ENCODE measurements at regions of chr10 and their contacts with region 1.

Region 1: GRCh38 chr10:35642027-35642792 is at the start of gene FZD8:
- DNase-seq: peak; percentile 63 to 95
- H3K4me3 ChIP-seq: peak within 1 kb of the TSS; percentile 76 to 83
- H3K27ac ChIP-seq: peak within 1 kb of the TSS; percentile 88 to 91
- H3K4me1 ChIP-seq: peaks cover 0 to 6% of the 10 kb centered on the region in 2 donors
- H3K27me3 ChIP-seq: no peaks in the 10 kb centered on the region
- CTCF ChIP-seq: peak in 1 of 3 experiments; percentile 27
- total RNA-seq, gene FZD8: 23.0 TPM

Region 2: GRCh38 chr10:34650156-34650555 is 992.1 kb before region 1 on chr10:
- intact Hi-C with region 1: no loop called
- DNase-seq: no peak
- H3K4me3 ChIP-seq: no peak overlapping the region
- H3K27ac ChIP-seq: no peak overlapping the region
- H3K4me1 ChIP-seq: no peaks in the 10 kb centered on the region
- H3K27me3 ChIP-seq: no peaks in the 10 kb centered on the region
- CTCF ChIP-seq: no peak

Region 3: DNA sequence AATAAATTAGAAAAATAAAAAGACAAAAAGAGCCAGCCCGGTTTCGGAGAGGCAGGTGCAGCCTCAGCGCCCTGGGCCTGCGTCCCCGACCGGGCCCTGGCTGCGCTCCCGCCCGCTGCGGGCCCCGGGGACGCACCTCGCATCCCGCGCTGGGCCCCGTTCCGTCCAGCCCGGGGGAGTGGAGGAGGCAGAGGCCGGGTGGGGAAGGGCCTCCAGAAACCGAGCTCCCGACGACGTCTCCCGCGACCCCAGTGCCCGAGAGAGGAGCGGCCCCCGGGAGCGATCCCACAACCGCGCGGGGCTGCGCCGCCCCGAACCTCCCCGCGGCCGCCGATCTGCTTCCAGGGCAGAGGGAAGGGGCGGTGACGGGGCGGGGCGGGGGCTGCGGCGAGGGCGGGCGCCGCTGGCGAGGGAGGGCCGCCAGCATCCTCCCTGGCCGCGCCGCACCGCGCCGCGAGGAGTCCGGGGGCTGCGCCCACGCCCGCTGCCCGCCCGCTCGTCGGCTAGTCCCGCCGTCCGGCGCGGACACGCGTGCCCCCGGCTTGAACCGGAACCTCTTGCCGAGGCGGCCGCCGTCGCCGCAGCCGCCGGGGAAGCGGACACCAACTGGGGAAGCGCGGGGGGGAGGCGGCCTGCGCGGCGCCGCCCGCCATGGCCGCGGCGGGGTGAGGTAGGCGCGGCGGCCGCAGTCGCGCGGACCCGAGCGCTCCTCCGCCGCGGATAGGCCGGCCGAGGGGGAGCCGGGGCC is 306.0 kb before region 1 on chr10 and contains the start of gene CCNY:
- intact Hi-C with region 1: loop called (anchors 5 kb)
- DNase-seq: peak in 1 of 2 donors; percentile 83
- H3K4me3 ChIP-seq: peak within 1 kb of the TSS; percentile 65 to 98
- H3K27ac ChIP-seq: peak within 1 kb of the TSS; percentile 70 to 80
- H3K4me1 ChIP-seq: peaks cover 3 to 35% of the 10 kb centered on the region in 2 donors
- H3K27me3 ChIP-seq: no peaks in the 10 kb centered on the region
- CTCF ChIP-seq: peak in 1 of 3 experiments; percentile 16
- total RNA-seq, gene CCNY: 37.5 TPM

Region 4: DNA sequence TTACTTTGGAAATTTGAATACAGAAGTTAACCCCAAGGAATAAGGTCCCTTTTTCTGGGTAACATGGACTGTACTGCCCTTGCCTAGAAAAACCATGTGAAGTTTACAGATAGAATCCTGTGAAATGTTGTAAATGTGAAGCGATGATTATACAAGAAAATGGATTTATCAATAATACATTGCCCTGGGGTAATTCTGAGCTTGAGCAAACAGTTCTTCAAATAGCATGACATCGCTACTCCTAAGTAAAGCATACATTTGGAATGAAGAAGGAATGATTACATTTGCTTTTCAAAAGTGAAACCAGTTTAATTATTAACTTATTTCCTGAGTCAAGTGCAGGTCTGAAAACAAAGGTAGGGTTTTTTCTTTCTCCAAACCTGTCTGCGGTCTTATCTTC is 43.2 kb after region 1 on chr10:
- intact Hi-C with region 1: no loop called
- DNase-seq: no peak
- H3K4me3 ChIP-seq: no peak overlapping the region
- H3K27ac ChIP-seq: no peak overlapping the region
- H3K4me1 ChIP-seq: no peaks in the 10 kb centered on the region
- H3K27me3 ChIP-seq: no peaks in the 10 kb centered on the region
- CTCF ChIP-seq: no peak

Region 5: DNA sequence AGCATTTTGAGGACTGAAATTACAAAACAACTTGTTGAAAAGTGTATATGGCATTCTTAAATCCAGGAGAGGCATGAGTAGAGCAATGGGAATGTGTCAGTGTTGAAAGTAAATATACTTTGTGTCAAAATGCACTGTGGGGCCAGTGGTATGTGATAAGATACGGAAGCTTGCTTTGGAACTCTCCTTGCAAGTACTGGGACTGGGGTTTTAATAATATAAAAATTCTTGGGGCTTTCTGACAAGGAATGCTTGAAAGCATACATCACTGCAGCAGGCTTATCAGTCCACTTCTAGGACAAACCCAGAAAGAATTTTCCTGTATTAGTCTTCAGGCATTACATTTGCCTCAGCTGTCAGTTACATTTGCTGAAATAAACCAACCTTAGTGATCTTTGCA is 472.7 kb after region 1 on chr10:
- intact Hi-C with region 1: loop called (anchors 5 kb)
- DNase-seq: no peak
- H3K4me3 ChIP-seq: no peak overlapping the region
- H3K27ac ChIP-seq: peak overlapping the region in 1 of 2 donors; percentile 10
- H3K4me1 ChIP-seq: peaks cover 0 to 30% of the 10 kb centered on the region in 2 donors
- H3K27me3 ChIP-seq: no peaks in the 10 kb centered on the region
- CTCF ChIP-seq: no peak

Region 6: DNA sequence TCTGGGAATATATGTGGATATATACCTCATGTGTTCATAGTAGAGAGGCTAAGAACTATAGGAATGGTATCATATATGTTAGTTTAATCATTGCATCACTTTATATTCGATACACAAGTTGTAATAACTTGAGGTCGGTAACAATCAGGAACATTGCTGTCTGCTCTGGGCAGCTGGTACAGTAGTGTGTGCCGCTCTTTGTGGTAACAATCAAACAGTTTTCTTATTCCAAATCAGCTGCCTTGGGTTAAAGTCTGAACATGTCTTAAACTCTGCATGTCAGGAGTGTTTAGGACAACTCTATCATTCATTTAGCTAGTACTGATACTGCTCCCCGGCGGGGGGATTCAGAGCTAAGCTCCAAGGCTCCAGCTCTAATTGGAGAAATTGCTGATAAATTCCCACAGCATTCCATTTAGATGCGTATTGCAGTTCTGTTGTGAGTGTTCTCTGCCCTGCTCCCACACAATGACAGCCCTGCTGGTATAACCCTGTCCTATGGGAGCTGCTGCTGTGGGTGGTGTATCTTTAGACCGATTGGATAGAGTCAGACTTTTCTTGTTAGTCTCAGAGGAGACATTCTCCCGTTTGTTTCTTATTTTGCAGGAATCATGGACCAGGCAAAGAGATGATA is 707.4 kb after region 1 on chr10:
- intact Hi-C with region 1: loop called (anchors 10 kb)
- DNase-seq: no peak
- H3K4me3 ChIP-seq: no peak overlapping the region
- H3K27ac ChIP-seq: no peak overlapping the region
- H3K4me1 ChIP-seq: peaks cover 0 to 7% of the 10 kb centered on the region in 2 donors
- H3K27me3 ChIP-seq: no peaks in the 10 kb centered on the region
- CTCF ChIP-seq: no peak

Measured in ascending aorta (tissue), 2 donors.